ENCODE measurements at regions of chr3 and their contacts with region 1.

Region 1: DNA sequence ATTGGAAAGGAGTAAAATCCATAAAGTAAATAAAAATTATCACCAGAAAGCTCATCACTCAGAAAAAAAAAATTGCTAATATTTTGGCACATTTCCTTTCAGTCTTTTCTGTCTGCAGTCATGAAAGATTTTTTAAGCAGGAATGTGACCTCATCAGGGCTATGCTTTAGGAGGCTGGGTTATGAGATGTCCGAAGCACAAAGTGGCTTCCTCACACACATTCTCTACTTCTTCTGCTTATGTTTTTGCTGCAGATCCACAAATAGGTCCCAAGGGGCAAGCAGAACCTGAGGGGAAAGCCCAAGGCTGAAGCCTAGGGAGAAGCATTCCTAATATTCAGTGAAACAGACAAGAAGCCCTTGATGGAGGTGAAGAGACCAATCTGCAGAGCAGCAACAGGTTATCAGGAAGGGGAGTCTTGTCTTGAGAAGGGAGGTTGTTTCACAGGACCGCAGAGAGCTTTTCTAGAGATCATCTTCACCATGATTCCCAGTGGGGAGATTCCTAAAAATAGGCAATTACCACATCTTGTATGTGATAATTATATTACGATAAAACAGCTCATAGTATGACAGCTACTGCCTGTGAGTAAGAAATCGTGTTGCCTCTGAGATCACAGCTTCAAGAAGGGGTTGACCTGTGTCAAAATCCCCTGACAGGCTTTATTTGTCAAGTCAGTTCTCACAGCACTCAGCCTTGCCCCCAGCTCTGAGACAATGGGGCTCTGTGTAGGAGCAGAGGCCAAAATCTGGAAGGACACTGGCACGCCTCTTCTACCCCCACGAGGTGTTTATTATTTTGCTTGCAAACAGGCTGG is 60.5 kb downstream of the IGF2BP2 start:
- DNase-seq: no peak
- H3K4me3 Mint-ChIP-seq: no peak overlapping the region
- H3K27ac Mint-ChIP-seq: no peak overlapping the region
- H3K4me1 Mint-ChIP-seq: no peaks in the 10 kb centered on the region
- H3K27me3 Mint-ChIP-seq: peaks cover 33% of the 10 kb centered on the region

Region 2: DNA sequence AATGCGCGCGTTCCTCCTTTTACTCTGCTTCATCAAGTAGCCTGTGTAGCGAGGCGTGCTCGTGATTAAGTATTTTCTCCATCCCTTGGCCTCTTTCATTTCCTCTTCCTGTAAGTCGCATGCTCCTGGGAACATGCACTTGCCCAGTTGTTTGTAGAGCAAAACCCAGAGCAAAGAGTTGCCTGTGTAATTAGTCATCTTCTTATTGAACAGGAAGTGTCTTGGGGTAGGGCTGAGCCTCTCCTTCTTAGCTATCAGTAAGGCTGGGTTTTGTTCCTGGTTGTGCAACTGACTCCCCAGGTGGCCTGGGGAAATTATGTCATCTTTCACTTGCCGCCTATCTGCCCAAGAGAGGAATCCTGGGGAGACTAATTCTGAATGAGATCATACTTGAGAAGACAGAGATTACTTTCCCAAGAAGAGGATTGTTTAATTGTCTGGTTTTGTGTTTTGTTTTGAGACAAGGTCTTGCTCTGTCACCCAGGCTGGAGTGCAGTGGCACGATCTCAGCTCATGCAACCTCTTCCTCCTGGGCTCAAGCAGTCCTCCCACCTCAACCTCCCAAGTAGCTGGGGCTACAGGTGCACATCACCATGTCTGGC is 226.9 kb before region 1 on chr3:
- intact Hi-C with region 1: no loop called
- DNase-seq: peak; percentile 24
- H3K4me3 Mint-ChIP-seq: peak overlapping the region; percentile 11
- H3K27ac Mint-ChIP-seq: peak overlapping the region; percentile 60
- H3K4me1 Mint-ChIP-seq: peaks cover 9% of the 10 kb centered on the region
- H3K27me3 Mint-ChIP-seq: peaks cover 4% of the 10 kb centered on the region

Region 3: DNA sequence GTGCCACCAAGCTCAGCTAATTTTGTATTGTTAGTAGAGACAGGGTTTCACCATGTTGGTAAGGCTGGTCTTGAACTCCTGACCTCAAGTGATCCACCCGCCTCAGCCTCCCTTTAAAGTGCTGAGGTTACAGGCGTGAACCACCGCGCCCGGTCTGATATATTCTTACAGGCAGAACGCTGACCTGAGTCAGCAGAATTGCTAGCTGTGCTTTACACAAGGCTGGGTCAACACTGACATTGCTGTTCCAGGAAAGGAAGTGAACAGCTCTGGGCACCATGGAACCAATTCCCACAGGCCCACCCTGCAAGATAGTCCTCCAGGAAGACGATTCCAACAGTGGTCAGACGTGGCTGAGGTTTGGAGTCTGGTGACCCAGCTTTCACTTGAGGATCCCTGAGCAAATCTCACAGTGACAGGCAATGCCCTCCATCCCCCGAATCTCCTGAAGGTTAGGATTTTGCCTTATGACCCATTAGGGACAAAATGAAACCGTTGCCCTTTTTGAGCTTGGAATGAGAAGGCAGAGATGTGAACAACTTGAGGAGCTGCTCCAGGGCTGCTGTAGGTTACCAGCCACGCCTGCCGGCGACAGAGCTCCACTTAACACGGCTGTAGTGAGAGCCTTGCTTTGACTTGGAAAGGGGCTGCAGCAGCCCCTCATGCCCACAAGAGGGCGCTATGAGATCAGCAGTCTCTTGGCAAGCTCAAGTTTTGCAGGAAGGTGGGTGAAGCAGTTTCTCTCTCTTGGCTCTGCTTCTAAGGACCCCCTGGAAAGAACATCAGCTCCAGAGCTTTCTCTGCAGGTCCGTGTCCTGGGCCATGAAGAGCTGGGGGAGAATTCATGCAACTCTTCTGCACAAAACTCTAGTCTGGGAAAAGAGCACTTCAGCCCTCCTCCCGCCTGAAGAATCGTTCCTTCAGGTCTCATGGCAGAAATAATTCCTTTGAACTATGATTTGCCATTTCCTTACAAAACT is 104.1 kb before region 1 on chr3:
- intact Hi-C with region 1: loop called (anchors 2 kb)
- DNase-seq: peak; percentile 51
- H3K4me3 Mint-ChIP-seq: no peak overlapping the region
- H3K27ac Mint-ChIP-seq: no peak overlapping the region
- H3K4me1 Mint-ChIP-seq: peaks cover 2% of the 10 kb centered on the region
- H3K27me3 Mint-ChIP-seq: peaks cover 16% of the 10 kb centered on the region

Region 4: GRCh38 chr3:185677146-185677829 is 87.1 kb before region 1 on chr3:
- intact Hi-C with region 1: loop called (anchors 2 kb)
- DNase-seq: no peak
- H3K4me3 Mint-ChIP-seq: no peak overlapping the region
- H3K27ac Mint-ChIP-seq: no peak overlapping the region
- H3K4me1 Mint-ChIP-seq: no peaks in the 10 kb centered on the region
- H3K27me3 Mint-ChIP-seq: peaks cover 24% of the 10 kb centered on the region

Region 5: GRCh38 chr3:185781759-185782158 is 17.4 kb after region 1 on chr3:
- intact Hi-C with region 1: no loop called
- DNase-seq: no peak
- H3K4me3 Mint-ChIP-seq: no peak overlapping the region
- H3K27ac Mint-ChIP-seq: no peak overlapping the region
- H3K4me1 Mint-ChIP-seq: no peaks in the 10 kb centered on the region
- H3K27me3 Mint-ChIP-seq: peaks cover 19% of the 10 kb centered on the region

Region 6: GRCh38 chr3:185846037-185846436 is 81.7 kb after region 1 on chr3:
- intact Hi-C with region 1: no loop called
- DNase-seq: no peak
- H3K4me3 Mint-ChIP-seq: no peak overlapping the region
- H3K27ac Mint-ChIP-seq: no peak overlapping the region
- H3K4me1 Mint-ChIP-seq: no peaks in the 10 kb centered on the region
- H3K27me3 Mint-ChIP-seq: peaks cover 5% of the 10 kb centered on the region

Region 7: DNA sequence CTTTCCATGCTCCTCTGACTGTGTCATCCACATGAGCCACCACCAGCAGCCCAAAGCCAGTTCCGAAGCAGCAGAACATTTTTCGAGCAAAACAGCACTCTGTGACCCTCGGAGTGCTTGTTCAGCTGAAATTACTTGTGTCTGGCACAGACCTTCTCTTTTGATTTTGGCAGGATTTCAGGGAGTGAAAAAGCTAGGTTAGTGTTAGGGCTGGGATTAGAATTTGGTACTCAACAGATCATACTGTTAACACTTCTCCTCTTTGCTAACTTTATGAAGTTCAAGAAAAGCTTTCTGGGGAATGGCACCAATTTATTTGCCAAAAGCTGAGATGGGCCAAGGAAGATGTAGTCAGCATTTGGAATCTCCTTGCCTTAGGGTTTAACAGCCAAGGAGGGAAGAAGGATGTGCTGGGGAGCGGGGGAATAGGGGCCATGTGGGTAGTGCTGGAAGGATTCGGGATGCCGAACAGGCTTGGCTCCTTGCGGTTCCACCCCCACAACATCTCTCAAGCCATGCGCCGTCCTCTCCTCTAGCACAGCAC is 228.5 kb after region 1 on chr3:
- intact Hi-C with region 1: no loop called
- DNase-seq: no peak
- H3K4me3 Mint-ChIP-seq: no peak overlapping the region
- H3K27ac Mint-ChIP-seq: no peak overlapping the region
- H3K4me1 Mint-ChIP-seq: no peaks in the 10 kb centered on the region
- H3K27me3 Mint-ChIP-seq: peaks cover 31% of the 10 kb centered on the region